ENCODE measurements at regions of chr6 and their contacts with region 1.

Region 1: GRCh38 chr6:33410050-33410710 is 634 bp upstream of the PHF1 start:
- DNase-seq: peak; percentile 99
- ATAC-seq: peak; percentile 92

Region 2: DNA sequence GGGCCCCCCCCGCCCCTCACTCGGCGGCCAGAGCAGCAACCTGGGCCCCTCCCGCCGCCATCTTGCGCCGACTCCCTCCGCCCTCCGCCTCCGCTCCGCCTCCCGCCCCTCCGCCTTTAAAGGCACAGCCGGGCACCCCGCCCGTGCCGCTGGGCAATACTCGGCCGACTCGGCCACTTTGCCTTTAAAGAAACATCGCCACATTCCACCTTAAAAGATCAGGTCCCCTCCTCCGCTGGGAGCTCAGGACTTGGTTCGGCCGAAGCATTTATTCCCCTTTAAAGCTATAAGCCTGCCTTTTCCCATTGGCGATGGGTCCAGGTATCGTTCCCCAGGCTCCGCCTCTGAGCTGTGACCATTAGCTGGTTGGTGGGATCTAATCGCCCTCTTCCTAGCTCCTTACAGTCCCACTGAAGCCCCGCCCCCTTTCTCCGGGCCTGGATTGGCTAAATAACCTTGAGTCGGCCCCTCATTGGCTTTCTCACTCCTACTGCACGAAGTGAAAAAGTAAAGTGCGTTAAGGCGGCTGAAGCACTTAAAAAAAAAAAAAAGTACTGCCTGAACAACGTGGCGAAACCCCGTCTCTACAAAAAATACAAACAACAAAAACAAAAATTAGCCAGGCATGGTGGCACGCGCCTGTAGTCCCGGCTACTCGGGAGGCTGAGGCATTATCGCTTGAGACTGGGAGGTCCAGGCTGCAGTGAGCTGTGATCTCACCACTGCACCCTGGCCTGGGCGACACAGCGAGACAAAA is 92.3 kb before region 1 on chr6 and contains the start of gene ZBTB22:
- intact Hi-C with region 1: loop called (anchors 1 kb)
- DNase-seq: peak; percentile 100
- ATAC-seq: peak; percentile 82
- total RNA-seq, gene ZBTB22: 10.8 TPM

Region 3: DNA sequence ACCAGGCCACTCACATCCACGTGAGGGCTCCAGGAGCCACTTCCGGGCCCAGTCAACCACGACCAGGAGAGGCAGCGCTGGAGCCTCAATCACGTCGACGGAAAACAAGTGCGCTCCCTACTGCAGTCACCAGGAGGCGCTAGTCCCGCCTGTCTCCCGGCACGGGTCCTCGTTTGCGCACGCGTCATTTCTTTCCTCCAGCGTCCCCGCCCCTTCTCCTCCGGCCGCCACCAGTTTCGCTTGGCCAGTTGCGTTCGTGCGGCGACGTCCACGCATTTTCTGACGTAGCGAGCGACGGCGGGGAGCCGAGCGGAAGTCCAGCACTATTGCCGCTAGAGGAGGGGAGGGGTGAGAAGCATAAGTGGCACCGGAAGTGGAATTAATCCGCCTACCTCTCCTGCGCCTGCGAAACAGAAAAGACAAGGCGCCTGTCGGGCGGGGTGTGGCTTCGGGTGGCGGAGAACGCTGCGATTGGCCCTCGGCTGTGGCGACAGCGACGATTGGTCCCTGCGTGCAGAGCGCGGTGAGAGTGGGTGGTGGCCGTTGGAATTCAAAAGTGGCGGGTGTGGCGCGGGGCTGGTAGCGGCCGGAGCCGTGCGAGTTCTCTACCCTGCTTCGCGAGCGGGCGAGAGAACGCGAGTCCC is 18.8 kb before region 1 on chr6 and contains the start of gene KIFC1:
- intact Hi-C with region 1: loop called (anchors 1 kb)
- DNase-seq: peak; percentile 99
- ATAC-seq: peak; percentile 99
- total RNA-seq, gene KIFC1: 1.3 TPM

Region 4: DNA sequence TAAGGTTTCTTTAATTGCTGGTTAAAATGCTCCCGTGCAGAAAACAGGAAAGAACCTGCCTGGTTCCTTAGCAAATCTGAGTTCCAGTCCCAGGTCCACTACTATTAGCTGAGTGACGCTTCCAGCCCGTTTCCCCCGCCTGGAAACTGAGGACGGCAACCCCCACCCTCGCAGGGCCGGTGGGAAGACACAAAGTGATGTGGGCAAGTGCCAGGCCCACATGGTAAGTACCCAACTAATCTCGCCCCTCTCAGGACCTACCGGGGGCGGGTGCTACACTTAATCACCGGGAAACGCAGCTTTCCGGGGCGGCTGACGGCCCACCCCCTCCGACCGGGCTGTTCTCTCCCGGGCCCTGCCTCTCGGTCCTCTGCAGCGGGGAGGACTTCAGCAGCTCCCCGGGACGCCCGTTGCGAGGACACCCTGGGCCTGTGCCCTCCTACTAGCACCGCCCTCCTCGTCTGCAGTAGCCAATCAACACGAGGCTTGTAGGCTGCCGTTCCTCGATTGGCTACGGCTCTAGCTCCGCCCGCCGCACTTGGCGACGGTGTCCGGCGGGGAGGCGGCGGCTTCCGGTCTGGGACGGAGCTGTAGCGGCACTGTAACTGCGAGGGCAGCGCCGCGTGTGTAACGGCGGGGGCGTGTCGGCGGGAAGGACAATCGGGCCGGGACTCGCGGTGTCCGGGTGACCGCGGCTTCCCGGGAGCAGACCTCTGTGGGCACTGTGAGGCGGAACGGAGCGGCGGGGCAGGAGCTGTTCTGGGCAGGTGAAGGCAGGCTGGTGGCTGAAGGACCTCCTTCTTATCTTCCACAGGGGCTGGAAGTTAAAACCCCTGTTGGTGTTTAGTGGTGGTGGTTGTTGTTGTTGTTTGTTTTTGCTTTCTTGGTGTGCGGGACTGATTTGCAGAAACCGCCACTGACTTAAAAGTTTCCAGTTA is 44.1 kb after region 1 on chr6 and contains the start of gene ZBTB9:
- intact Hi-C with region 1: loop called (anchors 1 kb)
- DNase-seq: peak; percentile 98
- ATAC-seq: peak; percentile 99
- total RNA-seq, gene ZBTB9: 4.1 TPM

Measured in Right ventricle myocardium inferior (tissue), 1 donor.